Breast epithelium (tissue), 4 donors: ENCODE measurements at regions of chr4 and their contacts with region 1.

Region 1: DNA sequence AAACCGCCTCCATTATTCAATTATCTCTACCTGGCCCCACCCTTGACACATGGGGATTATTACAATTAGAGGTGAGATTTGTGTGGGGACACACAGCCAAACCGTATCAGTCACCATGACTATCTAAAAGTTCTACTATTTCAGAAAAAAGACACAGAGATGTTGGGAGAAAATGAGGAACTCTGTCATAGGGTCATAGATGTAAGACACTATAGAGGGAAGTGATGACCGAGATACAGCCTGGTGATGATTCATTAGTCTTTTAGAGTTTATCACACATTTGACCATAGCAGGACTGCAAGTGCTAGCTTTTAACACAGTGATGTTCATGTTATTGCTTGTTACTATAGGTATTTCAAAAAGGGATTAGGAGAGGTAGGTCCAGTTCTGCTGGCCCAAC is 357.0 kb upstream of the AADAT start:
- DNase-seq: no peak
- H3K4me3 ChIP-seq: no peak overlapping the region
- H3K27ac ChIP-seq: no peak overlapping the region
- H3K4me1 ChIP-seq: no peaks in the 10 kb centered on the region
- H3K27me3 ChIP-seq: no peaks in the 10 kb centered on the region
- CTCF ChIP-seq: no peak
- POLR2A ChIP-seq: no peak

Region 2: DNA sequence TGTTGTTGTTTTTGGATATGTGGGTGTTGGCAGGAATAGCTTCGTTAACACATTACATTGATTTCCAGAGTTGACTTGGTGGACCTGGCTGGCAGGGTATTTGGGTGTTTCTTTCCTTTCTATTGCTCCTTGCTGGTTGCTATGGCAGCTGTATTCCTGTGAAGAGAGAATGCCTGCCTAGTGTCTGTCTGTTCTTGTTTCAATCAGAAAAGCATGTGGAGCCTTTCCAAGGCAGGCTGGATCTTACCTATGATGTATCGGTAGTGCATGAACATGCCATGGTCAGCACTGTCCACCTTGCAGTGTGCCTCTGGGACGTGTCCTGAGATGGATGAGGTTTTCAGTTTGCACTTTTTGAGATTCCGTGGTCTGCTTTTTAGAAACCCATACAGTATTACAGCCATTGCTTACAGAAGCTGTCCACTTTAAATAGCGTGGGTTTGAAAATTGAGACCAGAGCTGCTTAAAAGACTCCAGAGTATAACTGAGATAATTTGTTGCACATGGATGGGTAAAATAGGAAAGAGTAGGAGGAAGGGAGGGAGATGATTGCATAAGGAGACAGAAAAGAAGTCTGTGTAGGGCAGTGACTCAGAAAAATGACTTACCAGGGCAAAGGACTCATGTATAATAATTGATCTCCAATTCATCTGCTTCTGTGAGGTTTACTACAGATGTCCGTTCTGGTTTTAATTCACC is 337.0 kb before region 1 on chr4:
- intact Hi-C with region 1: loop called (anchors 5 kb)
- DNase-seq: no peak
- H3K4me3 ChIP-seq: peak overlapping the region in 1 of 3 donors; percentile 44
- H3K27ac ChIP-seq: no peak overlapping the region
- H3K4me1 ChIP-seq: no peaks in the 10 kb centered on the region
- H3K27me3 ChIP-seq: no peaks in the 10 kb centered on the region
- CTCF ChIP-seq: no peak
- POLR2A ChIP-seq: no peak